Calu3 (cell line): ENCODE measurements at regions of chr1 and their contacts with region 1.

Region 1: GRCh38 chr1:67214420-67215174 is 48.3 kb downstream of the IL23R start:
- DNase-seq: peak; percentile 64
- H3K4me3 Mint-ChIP-seq: no peak overlapping the region
- H3K27ac Mint-ChIP-seq: no peak overlapping the region
- H3K4me1 Mint-ChIP-seq: no peaks in the 10 kb centered on the region
- H3K27me3 Mint-ChIP-seq: peaks cover 4% of the 10 kb centered on the region
- CTCF ChIP-seq: no peak

Region 2: DNA sequence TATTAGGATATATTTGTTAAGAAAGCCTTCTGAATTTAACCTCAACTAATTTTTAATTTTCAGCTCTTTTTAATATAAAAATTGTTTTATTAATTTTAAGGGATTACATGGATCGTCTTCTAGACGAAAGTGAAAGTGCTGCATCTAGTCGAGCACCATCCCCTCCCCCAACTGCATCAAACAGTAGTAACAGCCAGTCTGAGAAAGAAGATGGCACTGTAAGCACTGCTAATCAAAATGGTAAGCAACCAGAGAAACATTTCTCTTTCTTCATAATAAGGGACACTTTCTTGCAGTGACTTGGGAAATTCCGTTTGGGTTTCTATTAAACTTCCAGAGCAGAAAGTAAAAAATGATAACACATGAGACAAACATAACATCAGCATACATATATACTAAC is 232.9 kb before region 1 on chr1:
- CTCF ChIA-PET with region 1: no interaction called
- intact Hi-C with region 1: no loop called
- DNase-seq: no peak
- H3K4me3 Mint-ChIP-seq: no peak overlapping the region
- H3K27ac Mint-ChIP-seq: no peak overlapping the region
- H3K4me1 Mint-ChIP-seq: peaks cover 14% of the 10 kb centered on the region
- H3K27me3 Mint-ChIP-seq: no peaks in the 10 kb centered on the region
- CTCF ChIP-seq: no peak

Region 3: GRCh38 chr1:66996018-66996682 is 218.4 kb before region 1 on chr1:
- CTCF ChIA-PET with region 1: interaction called, 15 read pairs
- intact Hi-C with region 1: loop called (anchors 1 kb)
- DNase-seq: peak; percentile 59
- H3K4me3 Mint-ChIP-seq: no peak overlapping the region
- H3K27ac Mint-ChIP-seq: no peak overlapping the region
- H3K4me1 Mint-ChIP-seq: no peaks in the 10 kb centered on the region
- H3K27me3 Mint-ChIP-seq: no peaks in the 10 kb centered on the region
- CTCF ChIP-seq: peak; percentile 65